IMR-90 (cell line): ENCODE measurements at regions of chr3 and their contacts with region 1.

Region 1: GRCh38 chr3:27134165-27134796 is 234.9 kb downstream of the NEK10 start:
- DNase-seq: peak; percentile 66
- ATAC-seq: peak; percentile 86
- H3K4me3 ChIP-seq: no peak overlapping the region
- H3K27ac ChIP-seq: no peak overlapping the region
- H3K4me1 ChIP-seq: no peaks in the 10 kb centered on the region
- H3K27me3 ChIP-seq: no peaks in the 10 kb centered on the region
- CTCF ChIP-seq: peak; percentile 91
- POLR2A ChIP-seq: no peak
- RAD21 ChIP-seq: peak; percentile 91

Region 2: GRCh38 chr3:27160146-27160545 is 25.9 kb after region 1 on chr3:
- CTCF ChIA-PET with region 1: no interaction called
- POLR2A ChIA-PET with region 1: no interaction called
- dilution Hi-C with region 1: no loop called
- in situ Hi-C with region 1: no loop called
- intact Hi-C with region 1: no loop called
- DNase-seq: no peak
- ATAC-seq: no peak
- H3K4me3 ChIP-seq: no peak overlapping the region
- H3K27ac ChIP-seq: no peak overlapping the region
- H3K4me1 ChIP-seq: no peaks in the 10 kb centered on the region
- H3K27me3 ChIP-seq: no peaks in the 10 kb centered on the region
- CTCF ChIP-seq: no peak
- POLR2A ChIP-seq: no peak
- RAD21 ChIP-seq: no peak

Region 3: DNA sequence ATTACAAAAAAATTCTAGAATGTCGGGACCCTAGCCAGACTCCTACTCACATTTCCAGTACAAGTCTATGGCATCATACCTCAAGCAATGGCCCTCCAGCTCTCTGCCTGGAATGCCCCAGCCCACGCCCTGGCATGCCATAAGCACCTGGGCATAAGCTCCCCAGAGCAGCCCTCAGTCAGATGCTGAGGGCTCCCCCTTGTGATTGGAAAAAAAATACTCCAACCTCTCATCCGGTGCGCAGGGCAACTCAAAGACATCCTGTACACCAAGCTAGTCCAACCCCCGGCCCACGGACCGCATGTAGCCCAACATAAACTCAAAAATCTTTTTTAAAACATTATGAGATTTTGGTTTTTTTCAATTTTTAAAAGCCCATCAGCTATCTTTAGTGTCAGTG is 119.5 kb after region 1 on chr3:
- CTCF ChIA-PET with region 1: interaction called, 32 read pairs
- POLR2A ChIA-PET with region 1: no interaction called
- dilution Hi-C with region 1: no loop called
- in situ Hi-C with region 1: loop called (anchors 10 kb)
- intact Hi-C with region 1: loop called (anchors 1 kb)
- DNase-seq: peak; percentile 21
- ATAC-seq: peak; percentile 84
- H3K4me3 ChIP-seq: no peak overlapping the region
- H3K27ac ChIP-seq: no peak overlapping the region
- H3K4me1 ChIP-seq: no peaks in the 10 kb centered on the region
- H3K27me3 ChIP-seq: no peaks in the 10 kb centered on the region
- CTCF ChIP-seq: peak; percentile 46
- POLR2A ChIP-seq: no peak
- RAD21 ChIP-seq: peak; percentile 64

Region 4: DNA sequence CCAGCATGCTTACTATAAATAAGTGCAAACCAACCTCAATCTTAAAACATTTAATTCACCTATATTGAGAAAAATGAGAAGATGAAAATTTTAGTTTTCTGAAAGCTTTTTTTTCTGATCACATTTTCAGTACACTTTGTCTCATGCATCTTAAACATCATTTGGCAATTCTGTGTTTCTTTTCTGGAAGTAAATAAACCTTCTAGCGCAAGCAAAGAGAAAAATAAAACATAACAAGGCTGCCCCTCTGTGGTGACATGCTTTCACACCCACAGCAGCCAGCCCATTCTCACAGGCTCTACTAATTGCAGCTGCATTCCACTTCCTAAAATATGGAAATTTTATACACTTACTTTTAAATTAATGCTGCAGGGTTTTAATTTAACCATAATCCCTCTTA is 144.8 kb after region 1 on chr3:
- CTCF ChIA-PET with region 1: interaction called, 3 read pairs
- POLR2A ChIA-PET with region 1: no interaction called
- dilution Hi-C with region 1: no loop called
- in situ Hi-C with region 1: no loop called
- intact Hi-C with region 1: loop called (anchors 1 kb)
- DNase-seq: no peak
- ATAC-seq: 0 out of 2 replicates have a peak, but pooled peaks have one; percentile 37
- H3K4me3 ChIP-seq: no peak overlapping the region
- H3K27ac ChIP-seq: no peak overlapping the region
- H3K4me1 ChIP-seq: no peaks in the 10 kb centered on the region
- H3K27me3 ChIP-seq: no peaks in the 10 kb centered on the region
- CTCF ChIP-seq: peak; percentile 38
- POLR2A ChIP-seq: no peak
- RAD21 ChIP-seq: peak; percentile 28; the same call in 1 of the 2 replicates

Region 5: DNA sequence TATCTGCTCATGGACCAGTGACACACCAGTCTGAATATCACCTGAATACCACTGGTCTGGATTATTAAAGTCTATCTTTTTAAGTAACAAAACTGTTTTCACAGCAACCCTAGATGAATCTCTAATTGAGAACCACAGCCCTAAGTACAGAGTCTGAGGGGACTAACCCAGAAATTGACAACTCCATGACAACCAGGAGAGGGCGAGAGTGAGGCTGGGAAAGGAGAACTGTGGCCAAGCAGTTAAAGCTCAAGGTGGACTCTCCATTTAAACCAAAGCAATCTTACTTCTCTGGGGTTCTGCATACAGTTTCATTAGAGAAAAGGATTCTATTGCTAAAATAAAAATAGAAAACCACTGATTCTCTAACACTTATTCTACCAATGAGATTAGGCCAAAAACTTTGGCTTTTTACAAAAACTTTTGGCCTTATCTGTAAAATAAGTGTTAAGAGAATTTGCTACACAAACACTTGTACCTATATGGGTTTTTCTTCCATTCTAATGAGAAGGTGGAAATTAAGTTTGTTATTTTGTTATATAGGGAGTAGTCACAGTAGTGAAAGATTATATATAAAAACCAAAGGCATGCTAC is 223.5 kb after region 1 on chr3:
- CTCF ChIA-PET with region 1: no interaction called
- POLR2A ChIA-PET with region 1: no interaction called
- dilution Hi-C with region 1: no loop called
- in situ Hi-C with region 1: loop called (anchors 10 kb)
- intact Hi-C with region 1: loop called (anchors 5 kb)
- DNase-seq: peak; percentile 56
- ATAC-seq: peak; percentile 66
- H3K4me3 ChIP-seq: no peak overlapping the region
- H3K27ac ChIP-seq: no peak overlapping the region
- H3K4me1 ChIP-seq: peaks cover 4% of the 10 kb centered on the region; the same call in 1 of the 2 replicates
- H3K27me3 ChIP-seq: no peaks in the 10 kb centered on the region
- CTCF ChIP-seq: peak; percentile 57
- POLR2A ChIP-seq: no peak
- RAD21 ChIP-seq: peak; percentile 52

Region 6: GRCh38 chr3:27368831-27369607 is 234.7 kb after region 1 on chr3 and contains the start of gene NEK10:
- CTCF ChIA-PET with region 1: no interaction called
- POLR2A ChIA-PET with region 1: no interaction called
- dilution Hi-C with region 1: no loop called
- in situ Hi-C with region 1: loop called (anchors 10 kb)
- intact Hi-C with region 1: loop called (anchors 5 kb)
- DNase-seq: peak; percentile 85
- ATAC-seq: peak; percentile 98
- H3K4me3 ChIP-seq: peak within 1 kb of the TSS; percentile 58
- H3K27ac ChIP-seq: no peak within 1 kb of the TSS
- H3K4me1 ChIP-seq: no peaks in the 10 kb centered on the region
- H3K27me3 ChIP-seq: no peaks in the 10 kb centered on the region
- CTCF ChIP-seq: no peak
- POLR2A ChIP-seq: no peak
- RAD21 ChIP-seq: no peak
- total RNA-seq, gene NEK10: 6.6 and 7.5 TPM in 2 replicates

Region 7: GRCh38 chr3:27467545-27467944 is 333.3 kb after region 1 on chr3:
- CTCF ChIA-PET with region 1: no interaction called
- POLR2A ChIA-PET with region 1: no interaction called
- dilution Hi-C with region 1: no loop called
- in situ Hi-C with region 1: loop called (anchors 10 kb)
- intact Hi-C with region 1: loop called (anchors 2 kb)
- DNase-seq: peak; percentile 61
- ATAC-seq: peak; percentile 78
- H3K4me3 ChIP-seq: no peak overlapping the region
- H3K27ac ChIP-seq: no peak overlapping the region
- H3K4me1 ChIP-seq: peaks cover 6% of the 10 kb centered on the region
- H3K27me3 ChIP-seq: no peaks in the 10 kb centered on the region
- CTCF ChIP-seq: peak; percentile 62
- POLR2A ChIP-seq: no peak
- RAD21 ChIP-seq: peak; percentile 52

Region 8: GRCh38 chr3:27681245-27681748 is 547.0 kb after region 1 on chr3:
- CTCF ChIA-PET with region 1: no interaction called
- POLR2A ChIA-PET with region 1: no interaction called
- dilution Hi-C with region 1: no loop called
- in situ Hi-C with region 1: loop called (anchors 10 kb)
- intact Hi-C with region 1: loop called (anchors 1 kb)
- DNase-seq: peak; percentile 83
- ATAC-seq: peak; percentile 52
- H3K4me3 ChIP-seq: peak overlapping the region; percentile 28; the same call in 1 of the 2 replicates
- H3K27ac ChIP-seq: peak overlapping the region; percentile 55; the same call in 1 of the 2 replicates
- H3K4me1 ChIP-seq: peaks cover 10% of the 10 kb centered on the region
- H3K27me3 ChIP-seq: no peaks in the 10 kb centered on the region
- CTCF ChIP-seq: peak; percentile 81
- POLR2A ChIP-seq: no peak
- RAD21 ChIP-seq: peak; percentile 72